Activated CD4-positive, alpha-beta T cell treated with anti-CD3 and anti-CD28 coated beads, Interleukin-2, amount 10 ng/mL, durations not matched to agents 24 days and 14 days (primary cell): ENCODE measurements at regions of chr7 and their contacts with region 1.

Region 1: GRCh38 chr7:85464042-85464651 is 277.3 kb upstream of the SEMA3D start:
- DNase-seq: no peak
- H3K4me3 Mint-ChIP-seq: no peak overlapping the region
- H3K27ac Mint-ChIP-seq: no peak overlapping the region
- H3K4me1 Mint-ChIP-seq: peaks cover 2% of the 10 kb centered on the region
- H3K27me3 Mint-ChIP-seq: peaks cover 2% of the 10 kb centered on the region

Region 2: DNA sequence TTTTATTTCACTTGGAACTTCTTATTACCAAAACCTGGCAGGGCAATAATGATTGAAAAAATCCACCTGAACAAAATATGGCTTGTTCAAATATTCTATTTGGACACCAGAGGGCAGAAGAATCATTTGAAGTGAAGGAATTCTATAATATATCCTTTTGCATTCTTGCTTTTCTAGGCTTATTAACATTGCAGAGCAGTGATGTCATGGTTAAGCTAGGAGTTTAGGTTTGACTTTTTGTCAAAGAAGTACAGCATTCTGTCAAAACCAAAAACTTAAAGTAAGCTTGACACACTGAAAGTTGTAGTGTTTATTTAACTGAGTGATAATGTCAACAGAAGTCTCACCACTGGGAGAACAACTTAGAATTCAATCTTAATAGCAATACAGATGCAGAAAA is 433.3 kb before region 1 on chr7:
- intact Hi-C with region 1: loop called (anchors 5 kb)
- DNase-seq: no peak
- H3K4me3 Mint-ChIP-seq: no peak overlapping the region
- H3K27ac Mint-ChIP-seq: no peak overlapping the region
- H3K4me1 Mint-ChIP-seq: no peaks in the 10 kb centered on the region
- H3K27me3 Mint-ChIP-seq: peaks cover 2% of the 10 kb centered on the region